HEK293 (cell line): ENCODE measurements at regions of chr6 and their contacts with region 1.

Region 1: GRCh38 chr6:127539272-127539671 is 20.1 kb upstream of the MTCL3 start:
- H3K4me3 ChIP-seq: no peak overlapping the region
- H3K27ac ChIP-seq: no peak overlapping the region
- H3K4me1 ChIP-seq: no peaks in the 10 kb centered on the region
- CTCF ChIP-seq: no peak

Region 2: DNA sequence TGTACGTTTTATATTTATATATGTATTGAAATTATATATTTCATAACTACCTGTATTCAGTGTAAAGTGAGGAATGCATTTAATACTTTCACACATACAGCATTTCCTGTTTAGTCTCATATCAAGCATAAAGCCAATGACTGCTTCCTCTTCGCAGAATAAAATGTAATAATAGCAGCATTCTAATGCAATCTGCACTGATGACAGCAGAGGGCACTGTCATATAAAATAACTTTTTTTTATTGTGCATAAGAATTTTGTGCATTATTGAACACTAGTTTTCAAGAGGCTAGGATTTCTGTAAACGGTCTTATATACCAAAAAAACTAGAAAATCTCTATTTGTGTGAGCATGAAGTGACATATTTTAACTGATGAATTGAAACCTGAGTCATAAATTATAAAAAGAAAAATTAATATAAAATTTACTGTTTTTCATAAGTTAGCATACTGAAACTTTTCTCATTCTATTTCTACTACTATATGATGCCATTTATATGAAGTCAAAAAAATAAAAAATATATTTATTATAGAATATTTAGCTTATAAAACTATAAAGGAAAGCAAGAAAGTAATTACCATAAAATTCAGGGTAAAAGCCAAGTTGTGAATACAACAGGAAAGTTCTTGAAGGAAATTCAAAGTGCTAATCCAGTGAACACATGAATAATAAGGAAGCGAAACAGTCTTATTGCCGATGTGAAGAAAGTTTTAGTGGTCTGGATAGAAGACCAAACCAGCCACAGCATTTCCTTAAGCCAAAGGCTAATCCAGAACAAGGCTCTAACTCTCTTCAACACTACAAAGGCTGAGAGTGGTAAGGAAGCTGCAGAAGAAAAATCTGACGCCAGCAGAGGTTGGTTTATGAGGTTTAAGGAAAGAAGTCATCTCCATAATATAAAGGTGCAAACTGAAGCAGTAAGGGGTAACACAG is 236.3 kb before region 1 on chr6:
- CTCF ChIA-PET with region 1: interaction called, 28 read pairs
- POLR2A ChIA-PET with region 1: no interaction called
- H3K4me3 ChIP-seq: no peak overlapping the region
- H3K27ac ChIP-seq: no peak overlapping the region
- H3K4me1 ChIP-seq: no peaks in the 10 kb centered on the region
- CTCF ChIP-seq: no peak

Region 3: GRCh38 chr6:127403636-127404035 is 135.6 kb before region 1 on chr6:
- CTCF ChIA-PET with region 1: no interaction called
- POLR2A ChIA-PET with region 1: no interaction called
- H3K4me3 ChIP-seq: no peak overlapping the region
- H3K27ac ChIP-seq: no peak overlapping the region
- H3K4me1 ChIP-seq: no peaks in the 10 kb centered on the region
- CTCF ChIP-seq: no peak

Region 4: GRCh38 chr6:127459231-127459641 is 80.0 kb before region 1 on chr6 and contains the start of gene KIAA0408:
- CTCF ChIA-PET with region 1: interaction called, 36 read pairs
- POLR2A ChIA-PET with region 1: no interaction called
- H3K4me3 ChIP-seq: no peak within 1 kb of the TSS
- H3K27ac ChIP-seq: no peak within 1 kb of the TSS
- H3K4me1 ChIP-seq: peaks cover 13% of the 10 kb centered on the region
- CTCF ChIP-seq: no peak

Region 5: GRCh38 chr6:127464881-127465459 is 74.3 kb before region 1 on chr6:
- CTCF ChIA-PET with region 1: interaction called, 48 read pairs
- POLR2A ChIA-PET with region 1: no interaction called
- H3K4me3 ChIP-seq: no peak overlapping the region
- H3K27ac ChIP-seq: no peak overlapping the region
- H3K4me1 ChIP-seq: peaks cover 3% of the 10 kb centered on the region; the same call in 1 of the 2 replicates
- CTCF ChIP-seq: peak; percentile 59; the same call in 1 of the 2 replicates

Region 6: GRCh38 chr6:127570739-127571389 is 31.6 kb after region 1 on chr6:
- CTCF ChIA-PET with region 1: no interaction called
- POLR2A ChIA-PET with region 1: no interaction called
- H3K4me3 ChIP-seq: no peak overlapping the region
- H3K27ac ChIP-seq: no peak overlapping the region
- H3K4me1 ChIP-seq: peaks cover 2% of the 10 kb centered on the region; the same call in 1 of the 2 replicates
- CTCF ChIP-seq: no peak